Heart right ventricle (tissue), 16 donors: ENCODE measurements at regions of chr7 and their contacts with region 1.

Region 1: GRCh38 chr7:71538210-71538609 is 406.3 kb downstream of the GALNT17 start:
- DNase-seq: no peak
- ATAC-seq: no peak
- H3K4me3 ChIP-seq: no peak overlapping the region
- H3K27ac ChIP-seq: no peak overlapping the region
- H3K4me1 ChIP-seq: no peaks in the 10 kb centered on the region
- H3K27me3 ChIP-seq: no peaks in the 10 kb centered on the region
- CTCF ChIP-seq: no peak

Region 2: DNA sequence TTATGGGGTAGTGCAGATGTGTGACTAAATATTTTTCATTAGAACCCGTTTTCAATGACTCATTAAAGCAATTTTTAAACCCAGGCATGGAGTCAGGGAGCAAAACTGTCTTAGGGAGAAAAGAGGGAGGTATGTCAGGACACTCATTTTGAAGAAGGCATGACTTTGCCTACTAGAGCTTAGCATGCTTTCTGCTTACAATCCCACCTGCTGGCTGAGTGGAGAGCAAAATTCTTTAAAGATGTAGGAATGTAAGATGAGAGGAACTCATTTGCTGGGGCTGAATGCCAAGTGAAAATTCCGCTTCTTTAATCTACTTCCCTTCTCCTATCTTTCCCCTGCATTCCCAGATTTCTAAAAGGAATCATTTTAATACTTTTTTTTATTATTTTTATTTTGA is 173.7 kb before region 1 on chr7:
- intact Hi-C with region 1: loop called in 1 of 10 experiments (anchors 10 kb)
- DNase-seq: no peak
- ATAC-seq: no peak
- H3K4me3 ChIP-seq: no peak overlapping the region
- H3K27ac ChIP-seq: no peak overlapping the region
- H3K4me1 ChIP-seq: peaks cover 0 to 11% (median 4%) of the 10 kb centered on the region in 9 donors
- H3K27me3 ChIP-seq: no peaks in the 10 kb centered on the region
- CTCF ChIP-seq: no peak

Region 3: DNA sequence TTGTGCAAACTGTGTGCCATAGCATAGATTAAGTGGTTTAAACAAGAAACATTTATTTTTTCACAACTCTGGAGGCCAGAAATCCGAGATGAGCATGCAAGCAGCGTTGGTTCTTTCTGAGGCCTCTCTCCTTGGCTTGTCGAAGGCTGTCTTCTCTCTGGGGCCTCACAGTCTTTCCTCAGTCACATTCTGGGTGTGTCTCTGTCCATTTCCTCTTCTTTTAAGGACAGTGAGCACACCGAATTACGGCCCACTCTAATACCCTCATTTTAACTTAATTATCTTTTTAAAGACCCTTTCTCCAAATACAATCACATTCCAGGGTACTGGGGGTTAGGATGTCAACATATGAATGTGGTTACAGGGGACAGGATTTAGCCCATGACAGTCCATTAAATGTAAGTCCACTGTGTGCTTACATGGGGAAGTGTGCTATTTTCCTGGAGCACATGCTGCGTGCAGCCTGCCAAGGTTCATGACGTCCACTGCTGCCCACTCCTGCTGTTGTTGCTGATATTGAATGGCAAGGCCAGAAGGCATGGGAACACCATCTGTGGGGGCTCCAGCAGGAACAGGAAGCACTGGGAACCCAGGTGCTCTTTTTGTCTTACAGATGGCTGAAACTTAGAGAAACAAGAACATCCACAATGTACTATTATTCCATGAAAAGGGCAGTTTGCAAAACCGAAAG is 40.8 kb before region 1 on chr7:
- intact Hi-C with region 1: no loop called
- DNase-seq: peak; percentile 37 to 40
- ATAC-seq: peak; percentile 11 to 98 (median 87)
- H3K4me3 ChIP-seq: peak overlapping the region in 2 of 10 donors; percentile 2 to 3
- H3K27ac ChIP-seq: peak overlapping the region in 4 of 10 donors; percentile 22 to 57 (median 39)
- H3K4me1 ChIP-seq: peaks cover 5 to 25% (median 11%) of the 10 kb centered on the region in 9 donors
- H3K27me3 ChIP-seq: no peaks in the 10 kb centered on the region
- CTCF ChIP-seq: no peak